PC-3 (cell line): ENCODE measurements at regions of chr18 and their contacts with region 1.

Region 1: GRCh38 chr18:31206787-31207381 is 44.2 kb upstream of the DSC1 start:
- DNase-seq: peak; percentile 85
- ATAC-seq: peak; percentile 90
- H3K4me3 ChIP-seq: peak overlapping the region; percentile 43; the same call in 1 of the 2 replicates
- H3K27ac ChIP-seq: peak overlapping the region; percentile 91
- H3K4me1 ChIP-seq: peaks cover 26% of the 10 kb centered on the region
- H3K27me3 ChIP-seq: no peaks in the 10 kb centered on the region
- CTCF ChIP-seq: 0 out of 2 replicates have a peak, but pooled peaks have one; percentile 15

Region 2: GRCh38 chr18:31010601-31011000 is 196.3 kb before region 1 on chr18:
- CTCF ChIA-PET with region 1: no interaction called
- POLR2A ChIA-PET with region 1: no interaction called
- intact Hi-C with region 1: loop called (anchors 10 kb)
- DNase-seq: no peak
- ATAC-seq: no peak
- H3K4me3 ChIP-seq: no peak overlapping the region
- H3K27ac ChIP-seq: peak overlapping the region; percentile 53
- H3K4me1 ChIP-seq: peaks cover 19% of the 10 kb centered on the region
- H3K27me3 ChIP-seq: no peaks in the 10 kb centered on the region
- CTCF ChIP-seq: no peak

Region 3: GRCh38 chr18:31042437-31043181 is 164.3 kb before region 1 on chr18 and contains the start of gene DSC3:
- CTCF ChIA-PET with region 1: no interaction called
- POLR2A ChIA-PET with region 1: interaction called, 3 read pairs
- intact Hi-C with region 1: loop called (anchors 2 kb)
- DNase-seq: peak; percentile 61
- ATAC-seq: peak; percentile 51
- H3K4me3 ChIP-seq: peak within 1 kb of the TSS; percentile 77
- H3K27ac ChIP-seq: peak within 1 kb of the TSS; percentile 63
- H3K4me1 ChIP-seq: peaks cover 40% of the 10 kb centered on the region
- H3K27me3 ChIP-seq: no peaks in the 10 kb centered on the region
- CTCF ChIP-seq: no peak
- total RNA-seq, gene DSC3: 11.1 and 14.6 TPM in 2 replicates

Region 4: DNA sequence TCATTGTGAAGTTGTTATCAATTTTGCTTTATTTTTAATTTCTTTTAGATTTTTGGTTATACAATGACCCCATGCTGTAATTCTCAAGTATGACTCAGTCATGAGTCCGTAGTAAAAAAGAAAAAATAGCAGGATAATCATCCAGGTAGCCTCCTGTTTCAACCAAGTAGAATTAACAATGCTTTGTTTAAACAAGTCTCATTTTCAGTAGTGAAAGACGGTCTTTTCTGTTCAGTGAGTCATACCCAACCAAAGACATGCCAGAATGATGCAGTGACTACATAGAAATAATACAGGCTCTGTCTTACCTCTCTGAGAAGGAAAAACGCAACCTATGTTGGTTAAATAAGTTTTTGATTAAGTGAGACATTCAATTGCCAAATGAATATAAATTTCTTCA is 23.6 kb after region 1 on chr18:
- CTCF ChIA-PET with region 1: no interaction called
- POLR2A ChIA-PET with region 1: no interaction called
- intact Hi-C with region 1: loop called (anchors 1 kb)
- DNase-seq: peak; percentile 80
- ATAC-seq: peak; percentile 96
- H3K4me3 ChIP-seq: 0 out of 2 replicates have a peak overlapping the region, but pooled peaks have one; percentile 30
- H3K27ac ChIP-seq: peak overlapping the region; percentile 90
- H3K4me1 ChIP-seq: peaks cover 17% of the 10 kb centered on the region
- H3K27me3 ChIP-seq: no peaks in the 10 kb centered on the region
- CTCF ChIP-seq: no peak

Region 5: DNA sequence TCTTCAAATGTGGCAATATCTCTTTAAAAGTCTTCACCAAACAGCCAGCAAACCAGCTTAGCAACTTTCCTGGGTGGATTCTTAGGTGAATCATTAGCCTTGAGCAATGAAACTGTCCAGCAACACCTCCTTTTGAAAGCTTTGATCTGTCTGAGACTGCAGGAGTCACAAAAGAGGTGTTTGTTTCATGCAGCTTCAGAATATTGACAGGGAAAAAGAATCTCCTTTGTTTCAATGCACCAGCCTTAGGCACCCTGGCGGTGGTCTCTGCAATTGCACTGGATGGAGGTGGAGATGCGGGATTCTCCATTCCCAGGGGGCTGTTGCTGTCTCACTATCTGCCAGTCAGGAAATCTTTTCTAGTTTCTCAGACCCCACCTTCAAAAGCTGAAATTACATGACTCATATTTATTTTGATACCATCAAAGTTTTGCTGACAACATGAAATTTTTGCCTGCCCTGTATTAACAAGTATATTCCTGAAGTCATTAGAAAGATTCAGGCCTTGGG is 35.1 kb after region 1 on chr18:
- CTCF ChIA-PET with region 1: interaction called, 4 read pairs
- POLR2A ChIA-PET with region 1: no interaction called
- intact Hi-C with region 1: loop called (anchors 2 kb)
- DNase-seq: peak; percentile 85
- ATAC-seq: peak; percentile 93
- H3K4me3 ChIP-seq: peak overlapping the region; percentile 44; the same call in 1 of the 2 replicates
- H3K27ac ChIP-seq: peak overlapping the region; percentile 90
- H3K4me1 ChIP-seq: peaks cover 35% of the 10 kb centered on the region
- H3K27me3 ChIP-seq: no peaks in the 10 kb centered on the region
- CTCF ChIP-seq: peak; percentile 64; the same call in 1 of the 2 replicates

Region 6: DNA sequence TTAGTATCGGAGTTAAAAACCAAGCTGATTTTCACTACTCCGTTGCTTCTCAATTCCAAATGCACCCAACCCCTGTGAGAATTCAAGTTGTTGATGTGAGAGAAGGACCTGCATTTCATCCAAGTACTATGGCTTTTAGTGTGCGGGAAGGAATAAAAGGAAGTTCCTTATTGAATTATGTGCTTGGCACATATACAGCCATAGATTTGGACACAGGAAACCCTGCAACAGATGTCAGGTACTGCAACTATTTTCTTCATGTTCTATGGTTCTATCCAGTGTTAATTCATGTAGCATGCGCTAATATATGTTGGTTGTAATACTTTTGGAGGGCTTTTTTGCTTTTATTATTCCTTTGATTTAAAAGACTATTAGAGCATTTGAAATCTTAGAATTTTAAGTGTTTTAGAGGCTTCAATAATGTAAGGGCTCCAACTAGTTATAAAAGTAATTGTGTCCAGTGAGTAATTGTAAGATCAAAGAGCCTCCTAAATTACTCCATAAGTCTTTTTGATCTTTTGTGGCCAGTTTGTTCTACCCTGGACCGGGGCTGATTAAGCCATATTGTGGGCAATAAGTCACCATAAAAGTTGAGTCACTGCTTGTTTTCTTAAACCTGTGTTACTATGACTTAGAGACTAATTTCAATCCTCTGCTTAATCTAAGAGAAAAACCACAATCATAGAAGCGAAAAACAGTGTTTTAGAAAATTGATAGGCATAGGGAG is 192.6 kb after region 1 on chr18:
- CTCF ChIA-PET with region 1: no interaction called
- POLR2A ChIA-PET with region 1: no interaction called
- intact Hi-C with region 1: loop called (anchors 10 kb)
- DNase-seq: peak; percentile 65
- ATAC-seq: peak; percentile 73
- H3K4me3 ChIP-seq: no peak overlapping the region
- H3K27ac ChIP-seq: peak overlapping the region; percentile 62
- H3K4me1 ChIP-seq: peaks cover 28% of the 10 kb centered on the region
- H3K27me3 ChIP-seq: no peaks in the 10 kb centered on the region
- CTCF ChIP-seq: no peak

Region 7: GRCh38 chr18:31603315-31603714 is 396.4 kb after region 1 on chr18:
- CTCF ChIA-PET with region 1: no interaction called
- POLR2A ChIA-PET with region 1: no interaction called
- intact Hi-C with region 1: no loop called
- DNase-seq: no peak
- ATAC-seq: no peak
- H3K4me3 ChIP-seq: no peak overlapping the region
- H3K27ac ChIP-seq: no peak overlapping the region
- H3K4me1 ChIP-seq: no peaks in the 10 kb centered on the region
- H3K27me3 ChIP-seq: no peaks in the 10 kb centered on the region
- CTCF ChIP-seq: no peak